Activated B cell treated with CpG ODN at 0.5 μM for 24 hours (primary cell): ENCODE measurements at regions of chr14 and their contacts with region 1.

Region 1: DNA sequence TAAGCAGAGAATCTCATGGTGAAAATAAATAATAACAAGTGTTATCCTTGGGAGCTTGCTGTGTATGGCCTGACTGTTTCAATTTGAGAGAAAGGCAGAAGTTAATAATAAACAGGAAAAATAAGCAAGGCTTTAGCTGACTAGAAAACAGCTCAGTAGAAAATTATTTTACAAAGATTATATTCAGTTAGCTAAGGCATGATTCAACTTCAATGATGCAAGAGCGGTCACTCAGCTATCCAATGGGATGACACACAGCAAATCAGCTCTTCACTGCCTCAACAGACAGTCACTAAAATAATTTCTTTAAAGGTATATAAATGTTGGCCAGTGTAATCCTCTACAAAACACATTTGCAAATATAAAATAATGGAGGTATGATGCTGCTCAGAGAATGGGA is 18.6 kb downstream of the GSTZ1 start:
- DNase-seq: no peak
- ATAC-seq: no peak
- H3K4me3 Mint-ChIP-seq: no peak overlapping the region
- H3K27ac Mint-ChIP-seq: no peak overlapping the region
- H3K4me1 Mint-ChIP-seq: no peaks in the 10 kb centered on the region
- H3K27me3 Mint-ChIP-seq: no peaks in the 10 kb centered on the region
- CTCF ChIP-seq: no peak

Region 2: GRCh38 chr14:76546426-76547221 is 792.8 kb before region 1 on chr14:
- CTCF ChIA-PET with region 1: no interaction called
- POLR2A ChIA-PET with region 1: no interaction called
- intact Hi-C with region 1: no loop called
- DNase-seq: no peak
- ATAC-seq: no peak
- H3K4me3 Mint-ChIP-seq: no peak overlapping the region
- H3K27ac Mint-ChIP-seq: no peak overlapping the region
- H3K4me1 Mint-ChIP-seq: no peaks in the 10 kb centered on the region
- H3K27me3 Mint-ChIP-seq: peaks cover 6% of the 10 kb centered on the region
- CTCF ChIP-seq: no peak

Region 3: DNA sequence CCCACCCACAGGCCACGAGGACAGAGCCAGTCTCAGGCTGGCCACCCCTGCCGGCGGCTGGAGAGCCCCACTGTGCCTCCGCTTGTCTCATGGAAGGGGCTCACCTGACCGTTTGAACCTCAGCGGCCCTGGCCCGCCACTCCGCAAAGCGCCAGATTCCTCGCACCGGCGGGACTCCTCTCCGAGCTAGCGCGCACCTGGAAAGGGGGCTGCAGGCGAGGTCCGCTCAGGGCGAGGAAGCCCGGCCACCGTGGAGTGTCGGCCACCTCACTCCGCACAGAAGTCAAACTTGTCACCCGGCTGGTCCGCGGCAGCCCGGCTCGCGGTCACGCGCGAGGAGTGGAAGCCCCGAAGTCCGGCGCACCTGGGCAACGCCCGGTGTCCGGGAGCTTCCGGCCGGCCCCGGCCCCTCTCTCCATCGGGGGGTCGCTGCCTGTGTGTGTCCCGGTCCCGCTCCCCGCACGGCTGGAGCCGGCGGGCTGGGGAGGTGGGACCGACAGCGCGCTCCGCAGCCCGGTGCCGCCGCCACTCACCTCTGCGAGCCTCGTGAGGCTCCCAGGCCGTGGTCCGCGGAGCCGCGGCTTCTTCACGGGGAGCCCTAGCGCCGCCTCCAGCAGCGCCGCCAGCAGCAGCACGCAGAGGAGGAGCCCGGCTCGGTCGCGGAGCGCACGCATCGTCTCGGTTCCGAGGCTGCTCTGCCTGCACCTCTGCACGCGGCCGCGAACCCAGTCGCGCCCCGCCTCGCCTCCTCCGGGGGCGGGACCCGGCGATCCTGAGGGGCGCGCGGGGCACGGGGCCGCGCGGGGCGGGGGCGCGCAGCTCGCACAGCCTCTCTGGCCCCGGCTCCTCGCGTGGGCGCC is 158.9 kb after region 1 on chr14 and contains the start of gene ISM2:
- CTCF ChIA-PET with region 1: no interaction called
- POLR2A ChIA-PET with region 1: interaction called, 10 read pairs
- intact Hi-C with region 1: no loop called
- DNase-seq: peak; percentile 37
- ATAC-seq: peak; percentile 89
- H3K4me3 Mint-ChIP-seq: peak within 1 kb of the TSS; percentile 70
- H3K27ac Mint-ChIP-seq: no peak within 1 kb of the TSS
- H3K4me1 Mint-ChIP-seq: peaks cover 14% of the 10 kb centered on the region
- H3K27me3 Mint-ChIP-seq: peaks cover 27% of the 10 kb centered on the region
- CTCF ChIP-seq: no peak
- total RNA-seq, gene ISM2: 0.07 TPM in 1 of 2 replicates, not detected in the other